Dorsolateral prefrontal cortex (tissue), 120 donors: ENCODE measurements at regions of chrX and their contacts with region 1.

Region 1: DNA sequence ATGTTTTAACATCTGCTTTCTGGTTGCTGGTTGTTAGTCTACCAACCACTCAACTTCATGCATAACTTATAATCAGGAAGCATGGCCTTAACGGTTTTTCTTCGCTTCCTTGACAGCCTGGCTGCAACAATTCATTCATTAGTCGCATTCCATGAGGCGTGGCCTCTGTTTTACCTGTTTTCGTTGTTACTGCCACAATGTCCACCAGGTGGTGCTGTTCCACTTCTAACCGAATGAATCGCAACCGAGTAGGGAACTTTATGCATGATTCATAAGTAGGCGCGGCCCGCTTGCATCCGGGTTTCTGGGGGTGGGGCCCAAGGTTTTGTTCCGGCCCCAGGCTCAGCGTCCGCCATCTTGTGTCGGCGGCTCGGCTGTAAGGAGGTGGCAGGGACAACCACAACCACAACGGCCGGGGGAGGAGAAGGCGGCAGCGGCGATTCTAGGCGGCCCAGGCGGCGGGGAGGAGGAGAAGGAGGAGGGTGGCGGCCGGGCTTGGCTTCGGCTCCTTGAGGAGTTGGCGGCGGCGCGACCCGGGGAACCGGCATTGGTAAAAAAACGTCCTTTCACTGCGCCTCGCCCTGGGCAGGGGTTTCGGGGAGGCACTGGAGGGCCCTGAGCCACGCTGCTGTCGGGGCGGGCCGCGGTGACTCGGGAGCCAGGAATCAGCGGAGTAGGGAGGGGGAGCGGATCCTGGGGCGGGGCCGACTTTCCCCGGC is at the start of gene UBA1:
- DNase-seq: peak; percentile 95 to 99 (median 98)
- H3K4me3 ChIP-seq: peak within 1 kb of the TSS; percentile 38 to 99 (median 89)
- H3K27ac ChIP-seq: peak within 1 kb of the TSS; percentile 66 to 99 (median 95)
- H3K27me3 ChIP-seq: peaks cover 0 to 25% (median 3%) of the 10 kb centered on the region in 45 donors
- CTCF ChIP-seq: peak in 55 of 56 donors; percentile 44 to 100 (median 96)
- total RNA-seq, gene UBA1: 186 to 279 (median 239) TPM

Region 2: DNA sequence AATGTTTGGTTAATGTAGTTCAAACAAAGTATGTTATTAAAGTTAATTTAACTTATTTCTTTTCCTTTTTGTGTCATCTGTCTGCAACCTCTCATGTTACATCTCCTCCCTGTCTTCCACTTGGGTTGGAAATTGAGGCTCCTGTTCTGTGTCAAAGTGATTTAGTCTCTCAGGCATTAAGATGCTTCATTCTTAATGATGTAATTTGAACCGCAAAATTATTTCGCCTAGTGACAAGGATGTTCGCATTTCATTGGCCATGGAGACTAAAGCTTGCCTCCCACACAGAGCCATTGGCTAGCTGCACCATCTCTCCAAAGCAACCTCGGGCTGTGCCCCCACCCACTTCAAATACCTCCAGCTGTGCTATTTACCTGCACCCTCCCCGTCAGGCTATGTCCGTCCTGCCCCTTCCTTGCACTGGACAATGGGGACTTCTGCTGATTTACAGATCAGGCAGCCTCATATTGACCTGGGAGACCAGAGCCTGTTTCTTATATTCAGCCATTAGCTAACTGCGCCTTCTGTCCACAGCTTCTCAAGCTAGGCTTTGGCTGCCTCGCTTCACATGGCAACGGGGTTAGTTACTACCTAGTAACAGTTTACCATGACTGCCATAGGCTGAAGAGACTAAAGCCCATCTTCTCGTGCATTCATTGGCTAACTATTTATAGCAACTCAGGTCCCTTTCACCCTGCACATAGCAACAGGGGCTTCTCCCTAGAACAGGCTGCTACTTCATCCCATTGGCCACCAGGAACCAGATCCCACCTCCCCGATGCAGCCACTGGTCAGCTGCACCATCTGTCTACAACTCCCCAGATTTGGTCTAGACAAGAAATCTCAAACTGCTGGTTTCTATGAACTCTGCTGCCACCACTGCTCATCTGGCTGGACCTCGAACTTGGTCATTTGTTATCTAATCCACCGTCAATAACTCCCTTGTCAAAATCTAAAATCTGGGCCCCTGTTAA is 168.2 kb after region 1 on chrX:
- intact Hi-C with region 1: loop called in 1 of 2 experiments (anchors 5 kb)
- DNase-seq: peak; percentile 42 to 92 (median 86)
- H3K4me3 ChIP-seq: peak overlapping the region in 58 of 59 donors; percentile 4 to 64 (median 48)
- H3K27ac ChIP-seq: peak overlapping the region in 57 of 59 donors; percentile 5 to 93 (median 81)
- H3K27me3 ChIP-seq: peaks cover 0 to 45% (median 2%) of the 10 kb centered on the region in 45 donors
- CTCF ChIP-seq: peak in 49 of 56 donors; percentile 13 to 54 (median 34)

Region 3: DNA sequence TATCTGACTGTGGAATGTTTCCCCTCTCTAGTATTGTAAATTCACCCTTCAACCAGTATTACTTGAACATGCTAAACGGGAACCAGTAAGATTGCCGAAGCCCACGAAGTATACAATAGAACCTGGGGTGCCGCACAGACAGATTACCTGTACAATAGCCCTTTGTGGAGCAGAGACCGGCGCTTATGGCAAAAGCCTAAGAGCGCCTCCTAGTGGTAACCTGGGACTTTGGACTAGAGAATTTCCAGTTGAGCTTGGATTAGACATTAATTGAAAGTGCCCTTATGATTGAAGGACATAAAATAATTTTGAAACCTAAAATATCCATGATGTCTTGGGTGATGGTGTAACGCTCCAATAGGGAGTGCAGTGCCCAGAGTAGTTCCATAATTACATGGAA is 190.9 kb after region 1 on chrX:
- intact Hi-C with region 1: loop called (anchors 2 to 5 kb)
- DNase-seq: peak in 9 of 10 donors; percentile 28 to 66 (median 52)
- H3K4me3 ChIP-seq: peak overlapping the region in 4 of 59 donors; percentile 14 to 39 (median 22)
- H3K27ac ChIP-seq: no peak overlapping the region
- H3K27me3 ChIP-seq: peaks cover 0 to 53% (median 4%) of the 10 kb centered on the region in 45 donors
- CTCF ChIP-seq: peak; percentile 42 to 86 (median 74)

Region 4: GRCh38 chrX:47523297-47523696 is 329.7 kb after region 1 on chrX:
- intact Hi-C with region 1: loop called (anchors 2 to 5 kb)
- DNase-seq: peak; percentile 68 to 89 (median 78)
- H3K4me3 ChIP-seq: peak overlapping the region; percentile 15 to 70 (median 55)
- H3K27ac ChIP-seq: peak overlapping the region in 37 of 59 donors; percentile 14 to 81 (median 57)
- H3K27me3 ChIP-seq: peaks cover 0 to 46% (median 1%) of the 10 kb centered on the region in 45 donors
- CTCF ChIP-seq: peak; percentile 40 to 93 (median 81)